PC-9 (cell line): ENCODE measurements at regions of chr18 and their contacts with region 1.

Region 1: DNA sequence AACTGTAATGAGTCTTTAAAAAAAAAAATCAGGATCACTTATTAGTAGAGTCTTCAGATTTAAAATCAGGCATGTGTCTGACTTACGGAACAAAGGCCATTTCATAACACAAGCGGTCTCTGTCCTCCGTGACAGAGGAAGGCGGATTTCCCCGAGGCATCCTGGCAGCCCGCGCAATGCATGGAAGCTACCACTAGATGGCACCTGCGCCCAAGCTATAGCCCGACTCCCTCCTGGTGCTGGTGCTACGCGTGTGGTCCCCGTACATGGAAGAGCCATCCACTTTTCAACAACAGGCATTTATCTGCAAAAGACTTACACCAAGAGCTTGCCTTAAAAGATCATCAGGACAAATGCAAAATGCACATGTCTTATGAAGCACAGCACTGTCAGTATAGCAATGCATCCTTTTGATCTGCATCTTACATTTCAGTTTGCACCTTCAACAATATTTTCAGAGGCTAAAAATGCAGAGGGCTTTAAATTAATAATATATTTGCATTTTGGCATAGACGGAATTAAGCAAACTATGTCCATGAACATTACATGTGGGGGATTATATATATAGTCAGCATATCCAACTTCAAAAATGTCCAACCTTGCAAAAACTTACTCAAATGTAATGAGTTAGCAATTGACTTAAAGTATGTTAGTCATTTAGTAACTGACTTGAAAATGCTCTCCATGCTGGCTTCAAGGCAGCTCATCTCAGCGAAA is 96.0 kb downstream of the ZNF516 start:
- DNase-seq: peak; percentile 42 to 59
- H3K4me3 ChIP-seq: no peak overlapping the region
- H3K27ac ChIP-seq: no peak overlapping the region
- H3K4me1 ChIP-seq: peaks cover 8% of the 10 kb centered on the region
- H3K27me3 ChIP-seq: no peaks in the 10 kb centered on the region
- CTCF ChIP-seq: peak; percentile 96

Region 2: GRCh38 chr18:75752740-75753263 is 646.3 kb before region 1 on chr18:
- CTCF ChIA-PET with region 1: no interaction called
- POLR2A ChIA-PET with region 1: no interaction called
- intact Hi-C with region 1: no loop called
- DNase-seq: no peak
- H3K4me3 ChIP-seq: no peak overlapping the region
- H3K27ac ChIP-seq: no peak overlapping the region
- H3K4me1 ChIP-seq: no peaks in the 10 kb centered on the region
- H3K27me3 ChIP-seq: peaks cover 19% of the 10 kb centered on the region; the same call in 1 of the 2 replicates
- CTCF ChIP-seq: no peak

Region 3: GRCh38 chr18:76246590-76246989 is 152.5 kb before region 1 on chr18:
- CTCF ChIA-PET with region 1: no interaction called
- POLR2A ChIA-PET with region 1: no interaction called
- intact Hi-C with region 1: no loop called
- DNase-seq: no peak
- H3K4me3 ChIP-seq: no peak overlapping the region
- H3K27ac ChIP-seq: no peak overlapping the region
- H3K4me1 ChIP-seq: no peaks in the 10 kb centered on the region
- H3K27me3 ChIP-seq: peaks cover 47% of the 10 kb centered on the region
- CTCF ChIP-seq: no peak

Region 4: GRCh38 chr18:76643996-76644395 is 244.9 kb after region 1 on chr18:
- CTCF ChIA-PET with region 1: no interaction called
- POLR2A ChIA-PET with region 1: no interaction called
- intact Hi-C with region 1: no loop called
- DNase-seq: no peak
- H3K4me3 ChIP-seq: no peak overlapping the region
- H3K27ac ChIP-seq: no peak overlapping the region
- H3K4me1 ChIP-seq: no peaks in the 10 kb centered on the region
- H3K27me3 ChIP-seq: peaks cover 17% of the 10 kb centered on the region; the same call in 1 of the 2 replicates
- CTCF ChIP-seq: no peak

Region 5: DNA sequence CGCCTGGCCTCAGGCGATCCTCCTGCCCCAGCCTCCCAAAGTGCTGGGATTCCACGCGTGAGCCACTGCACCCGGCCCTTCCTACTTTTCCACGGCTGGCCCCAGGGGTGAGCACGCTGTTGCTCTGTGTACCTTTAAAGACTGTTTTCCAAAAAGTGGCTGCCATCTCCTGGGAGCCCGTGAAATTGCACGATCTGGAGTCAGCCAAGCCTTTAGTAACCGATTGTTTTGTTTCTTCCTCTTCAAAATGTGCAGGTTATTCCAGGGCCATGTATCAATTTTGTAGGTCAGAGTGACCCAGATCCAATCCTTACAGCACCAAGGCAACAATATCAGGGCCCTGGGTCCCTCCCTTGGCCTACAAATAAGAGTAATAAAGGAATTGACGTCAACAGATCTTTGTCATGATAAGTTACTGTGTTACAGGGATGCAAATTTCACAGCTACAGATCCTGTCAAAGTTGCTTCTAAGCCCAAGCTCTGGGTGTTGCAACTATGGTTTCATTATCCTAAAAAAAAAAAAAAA is 287.7 kb after region 1 on chr18:
- CTCF ChIA-PET with region 1: no interaction called
- POLR2A ChIA-PET with region 1: no interaction called
- intact Hi-C with region 1: loop called (anchors 2 kb)
- DNase-seq: peak; percentile 26 to 48
- H3K4me3 ChIP-seq: peak overlapping the region; percentile 1; the same call in 1 of the 2 replicates
- H3K27ac ChIP-seq: peak overlapping the region; percentile 23
- H3K4me1 ChIP-seq: peaks cover 13% of the 10 kb centered on the region
- H3K27me3 ChIP-seq: peaks cover 31% of the 10 kb centered on the region
- CTCF ChIP-seq: peak; percentile 79

Region 6: DNA sequence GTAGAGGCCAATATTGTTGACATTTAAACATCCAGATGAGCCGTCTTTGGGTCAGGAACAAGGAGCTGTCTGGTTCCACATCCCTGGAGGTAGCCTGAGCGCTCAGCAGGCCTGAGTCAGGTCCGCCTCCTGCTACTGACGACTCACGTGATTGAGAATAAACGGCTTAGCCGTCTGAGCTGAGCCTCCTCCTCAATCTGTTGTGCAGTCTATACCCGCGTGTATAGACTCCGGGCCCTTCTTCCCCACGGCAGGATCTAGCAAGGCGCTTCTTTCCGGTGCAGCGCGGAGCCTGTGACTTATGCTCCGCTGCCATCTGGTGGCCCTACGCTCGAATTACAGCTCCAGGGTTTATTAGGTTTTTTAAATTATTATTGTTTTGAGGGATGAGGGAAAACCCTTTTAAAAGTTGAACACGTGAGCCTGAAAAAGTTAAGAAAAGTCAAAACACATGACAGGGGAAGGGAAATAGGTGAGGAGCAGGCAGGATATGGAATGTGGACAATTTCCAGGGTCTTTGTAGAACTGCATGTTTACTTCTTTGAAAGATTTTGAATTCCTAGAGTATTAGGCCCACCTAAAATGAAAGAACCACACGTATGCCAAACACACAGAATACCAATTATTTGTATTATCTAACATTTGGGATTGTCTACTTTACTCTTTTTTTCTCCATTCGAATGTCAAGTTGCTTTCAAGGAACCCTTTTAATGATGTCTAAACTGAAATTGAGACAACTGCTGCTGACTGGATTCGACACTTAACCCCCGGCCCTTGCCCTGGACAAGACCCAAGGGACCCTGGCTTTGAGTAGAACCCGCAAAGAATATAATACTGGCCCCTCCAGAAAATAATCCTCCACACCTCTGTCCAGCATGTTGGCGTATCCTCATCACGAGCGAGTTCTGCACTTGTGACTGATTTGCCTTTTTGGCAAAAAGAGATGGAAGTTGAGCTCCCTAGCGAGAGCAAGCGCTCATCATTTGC is 310.9 kb after region 1 on chr18:
- CTCF ChIA-PET with region 1: interaction called, 9 read pairs
- POLR2A ChIA-PET with region 1: no interaction called
- intact Hi-C with region 1: loop called (anchors 1 kb)
- DNase-seq: peak; percentile 27 to 39
- H3K4me3 ChIP-seq: no peak overlapping the region
- H3K27ac ChIP-seq: no peak overlapping the region
- H3K4me1 ChIP-seq: no peaks in the 10 kb centered on the region
- H3K27me3 ChIP-seq: peaks cover 13% of the 10 kb centered on the region; the same call in 1 of the 2 replicates
- CTCF ChIP-seq: peak; percentile 97